ENCODE measurements at regions of chr18 and their contacts with region 1.

Region 1: GRCh38 chr18:2547477-2548087 is 23.7 kb downstream of the METTL4 start:
- DNase-seq: no peak
- ATAC-seq: peak in 3 of 4 donors; percentile 77 to 82 (median 80)
- H3K4me3 ChIP-seq: no peak overlapping the region
- H3K27ac ChIP-seq: no peak overlapping the region
- H3K4me1 ChIP-seq: no peaks in the 10 kb centered on the region
- H3K27me3 ChIP-seq: no peaks in the 10 kb centered on the region
- CTCF ChIP-seq: peak; percentile 9 to 48 (median 26)

Region 2: DNA sequence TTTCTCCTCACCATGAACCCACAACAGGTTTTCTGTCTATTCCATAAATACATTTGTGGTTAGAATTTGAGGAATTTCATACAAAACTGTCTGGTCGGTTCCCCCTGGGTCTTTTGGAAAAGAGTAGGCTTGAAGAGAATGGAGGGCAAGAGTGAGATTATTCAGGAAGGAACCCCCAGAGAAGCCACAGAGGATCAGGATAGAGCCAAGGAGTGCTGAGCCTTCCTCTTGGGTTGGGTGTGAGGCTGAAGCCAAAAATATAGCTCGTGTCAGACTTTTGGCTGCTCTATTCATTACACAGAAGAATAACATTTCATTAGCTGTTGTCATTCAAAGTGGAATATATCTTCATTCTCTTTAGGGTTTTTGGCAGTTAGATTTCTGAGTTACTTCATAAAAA is 1689.6 kb before region 1 on chr18:
- intact Hi-C with region 1: loop called in 1 of 3 experiments (anchors 5 kb)
- DNase-seq: no peak
- ATAC-seq: no peak
- H3K4me3 ChIP-seq: no peak overlapping the region
- H3K27ac ChIP-seq: no peak overlapping the region
- H3K4me1 ChIP-seq: no peaks in the 10 kb centered on the region
- H3K27me3 ChIP-seq: no peaks in the 10 kb centered on the region
- CTCF ChIP-seq: no peak

Region 3: DNA sequence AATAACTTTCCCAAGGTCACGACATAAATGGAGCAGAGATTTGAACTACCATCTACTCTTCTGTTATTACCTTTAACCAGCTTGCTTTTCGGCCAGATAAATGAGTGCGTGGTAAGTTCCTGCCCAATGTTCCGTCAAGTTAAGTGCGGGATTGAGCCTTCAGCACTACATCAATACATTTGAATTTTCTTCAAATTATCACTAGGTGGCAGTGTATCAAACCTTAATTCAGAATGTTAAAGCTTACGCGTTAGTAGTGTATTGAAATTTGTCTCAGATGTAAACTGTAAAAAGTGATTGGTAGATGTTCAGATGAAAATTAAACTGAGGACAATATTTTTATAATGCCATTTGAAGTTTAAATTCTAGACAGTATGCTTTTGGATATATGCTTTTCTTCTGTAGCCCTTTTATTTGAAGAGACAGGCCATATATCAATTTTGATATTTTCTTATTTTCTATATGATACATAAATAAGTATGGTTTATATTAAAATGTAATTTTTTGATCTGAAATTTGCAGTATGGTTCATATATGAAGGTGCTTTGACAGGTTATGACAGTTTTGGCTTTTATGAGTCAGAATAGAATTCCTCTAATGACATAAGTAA is 961.6 kb before region 1 on chr18:
- intact Hi-C with region 1: loop called in 1 of 3 experiments (anchors 10 kb)
- DNase-seq: no peak
- ATAC-seq: peak in 3 of 4 donors; percentile 69 to 77 (median 73)
- H3K4me3 ChIP-seq: no peak overlapping the region
- H3K27ac ChIP-seq: no peak overlapping the region
- H3K4me1 ChIP-seq: no peaks in the 10 kb centered on the region
- H3K27me3 ChIP-seq: peaks cover 0 to 6% (median 0%) of the 10 kb centered on the region in 4 donors
- CTCF ChIP-seq: peak in 2 of 4 donors; percentile 30 to 31

Region 4: DNA sequence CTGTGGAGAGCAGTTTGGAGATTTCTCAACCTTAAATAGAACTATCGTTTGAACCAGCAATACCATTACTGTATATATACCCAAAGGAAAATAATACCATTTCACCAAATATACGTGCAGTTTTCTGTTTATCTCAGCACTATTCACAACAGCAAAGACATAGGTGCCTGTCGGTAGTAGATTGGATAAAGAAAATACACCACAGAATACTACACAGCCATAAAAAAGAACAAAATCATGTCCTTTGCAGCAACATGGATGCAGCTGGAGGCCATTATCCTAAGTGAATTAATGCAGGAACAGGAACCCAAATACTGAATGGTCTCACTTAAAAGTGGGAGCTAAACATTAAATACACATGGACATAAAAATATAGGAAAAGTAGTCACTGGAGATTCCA is 189.2 kb after region 1 on chr18:
- intact Hi-C with region 1: no loop called
- DNase-seq: no peak
- ATAC-seq: no peak
- H3K4me3 ChIP-seq: no peak overlapping the region
- H3K27ac ChIP-seq: no peak overlapping the region
- H3K4me1 ChIP-seq: no peaks in the 10 kb centered on the region
- H3K27me3 ChIP-seq: no peaks in the 10 kb centered on the region
- CTCF ChIP-seq: no peak

Region 5: DNA sequence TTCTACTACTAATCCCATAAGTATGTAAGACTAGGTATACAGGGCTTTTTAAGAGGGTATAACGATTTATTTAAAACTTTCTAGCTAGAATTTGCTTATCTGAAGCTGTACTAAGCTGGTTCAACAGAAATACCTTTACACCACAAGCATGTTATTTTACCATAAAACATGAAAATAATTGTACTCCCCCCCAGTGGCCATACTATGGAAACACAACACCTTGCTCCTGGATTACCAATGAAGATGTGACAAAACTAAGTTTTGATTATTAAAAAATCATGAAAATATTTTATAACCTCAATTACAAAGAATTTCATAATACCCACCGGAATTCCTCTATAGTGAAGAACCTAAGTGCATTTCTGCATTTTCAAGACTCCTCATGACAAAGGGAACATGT is 438.0 kb after region 1 on chr18:
- intact Hi-C with region 1: no loop called
- DNase-seq: no peak
- ATAC-seq: peak; percentile 67 to 77 (median 76)
- H3K4me3 ChIP-seq: no peak overlapping the region
- H3K27ac ChIP-seq: peak overlapping the region in 3 of 4 donors; percentile 10 to 80 (median 73)
- H3K4me1 ChIP-seq: peaks cover 21 to 58% (median 45%) of the 10 kb centered on the region in 3 donors
- H3K27me3 ChIP-seq: no peaks in the 10 kb centered on the region
- CTCF ChIP-seq: peak in 3 of 4 donors; percentile 37 to 44 (median 41)

Measured in pancreas (tissue), 10 donors.